ENCODE measurements at regions of chr11 and their contacts with region 1.

Region 1: DNA sequence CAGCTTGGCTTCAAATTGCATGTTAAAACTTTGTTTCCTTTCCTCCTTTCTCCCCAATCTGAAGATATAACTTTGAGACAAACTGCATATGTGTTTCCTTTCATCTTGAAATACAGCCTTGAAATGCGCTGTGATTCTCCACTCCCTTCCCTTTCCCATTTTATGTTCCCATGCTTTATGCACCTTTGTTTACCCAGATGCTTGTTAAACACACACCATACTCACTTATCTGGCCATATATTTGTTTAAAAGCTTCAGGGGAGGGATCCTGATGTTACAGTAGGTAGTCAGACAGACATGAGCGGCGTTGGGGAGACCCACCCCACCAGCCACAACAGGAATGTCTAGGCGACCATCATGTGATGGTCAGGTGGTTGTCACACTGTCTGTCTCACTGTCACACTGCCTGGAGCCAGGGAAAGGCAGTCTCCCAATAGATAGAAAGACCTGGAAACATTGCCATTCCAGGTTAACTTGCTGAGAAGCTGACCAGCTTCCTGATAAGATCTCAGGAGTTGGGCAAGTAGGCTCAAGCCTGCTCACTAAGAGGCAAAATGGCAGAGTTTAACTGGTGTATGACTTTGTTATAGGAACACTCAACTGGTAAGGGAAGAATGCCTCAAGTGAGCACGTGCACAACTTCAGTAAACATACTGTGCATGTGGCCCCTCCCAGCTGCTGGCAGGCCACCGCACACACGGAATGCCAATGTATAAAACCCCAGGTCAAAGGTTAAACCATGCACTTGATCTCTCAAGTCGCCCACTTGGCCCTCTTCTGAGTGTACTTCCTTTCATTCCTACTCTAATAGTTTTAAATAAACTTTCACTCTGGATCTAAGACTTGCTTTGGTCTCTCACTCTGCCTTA is 23.5 kb upstream of the MSANTD2 start:
- DNase-seq: no peak

Region 2: DNA sequence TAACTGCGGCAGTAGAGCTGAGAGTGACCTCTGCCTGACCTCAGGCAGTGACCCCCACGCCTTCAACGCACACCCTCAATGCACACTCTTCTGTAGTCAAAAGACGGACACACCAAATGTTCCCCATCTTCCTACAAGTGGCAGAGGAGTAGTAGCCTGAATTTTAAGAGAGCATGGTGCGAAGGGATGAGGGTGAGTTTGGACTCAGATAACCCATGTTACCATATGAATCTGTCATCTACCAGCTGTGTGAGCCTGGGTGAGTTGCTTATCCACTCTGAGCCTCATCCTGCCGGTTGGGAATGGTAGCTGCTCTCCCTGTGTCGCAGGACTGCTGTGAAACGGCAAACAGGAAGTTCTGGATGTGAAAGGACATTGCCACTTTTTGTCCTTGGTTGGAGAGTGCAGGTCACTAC is 20.9 kb after region 1 on chr11:
- intact Hi-C with region 1: loop called in 1 of 2 experiments (anchors 1 kb)
- DNase-seq: no peak

Region 3: DNA sequence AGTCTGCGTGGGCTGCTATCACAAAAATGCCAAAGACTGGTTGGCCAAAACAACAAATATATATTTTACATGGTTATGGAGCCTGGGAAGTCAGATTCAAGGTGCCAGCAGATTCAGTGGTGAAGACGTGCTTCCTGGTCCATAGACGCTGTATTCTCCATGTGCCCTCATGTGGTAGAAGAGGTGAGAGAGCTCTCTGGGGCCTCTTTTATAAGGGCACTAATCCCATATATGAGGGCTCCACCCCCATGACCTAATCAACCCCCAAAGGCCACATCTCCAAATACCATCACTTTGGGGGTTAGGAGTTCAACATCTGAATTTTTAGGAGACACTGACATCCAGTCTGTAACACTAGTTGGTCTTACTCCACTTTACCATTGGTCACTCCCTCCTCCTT is 31.7 kb after region 1 on chr11:
- intact Hi-C with region 1: loop called in 1 of 2 experiments (anchors 2 kb)
- DNase-seq: no peak